AG04449 (cell line): ENCODE measurements at regions of chr14 and their contacts with region 1.

Region 1: DNA sequence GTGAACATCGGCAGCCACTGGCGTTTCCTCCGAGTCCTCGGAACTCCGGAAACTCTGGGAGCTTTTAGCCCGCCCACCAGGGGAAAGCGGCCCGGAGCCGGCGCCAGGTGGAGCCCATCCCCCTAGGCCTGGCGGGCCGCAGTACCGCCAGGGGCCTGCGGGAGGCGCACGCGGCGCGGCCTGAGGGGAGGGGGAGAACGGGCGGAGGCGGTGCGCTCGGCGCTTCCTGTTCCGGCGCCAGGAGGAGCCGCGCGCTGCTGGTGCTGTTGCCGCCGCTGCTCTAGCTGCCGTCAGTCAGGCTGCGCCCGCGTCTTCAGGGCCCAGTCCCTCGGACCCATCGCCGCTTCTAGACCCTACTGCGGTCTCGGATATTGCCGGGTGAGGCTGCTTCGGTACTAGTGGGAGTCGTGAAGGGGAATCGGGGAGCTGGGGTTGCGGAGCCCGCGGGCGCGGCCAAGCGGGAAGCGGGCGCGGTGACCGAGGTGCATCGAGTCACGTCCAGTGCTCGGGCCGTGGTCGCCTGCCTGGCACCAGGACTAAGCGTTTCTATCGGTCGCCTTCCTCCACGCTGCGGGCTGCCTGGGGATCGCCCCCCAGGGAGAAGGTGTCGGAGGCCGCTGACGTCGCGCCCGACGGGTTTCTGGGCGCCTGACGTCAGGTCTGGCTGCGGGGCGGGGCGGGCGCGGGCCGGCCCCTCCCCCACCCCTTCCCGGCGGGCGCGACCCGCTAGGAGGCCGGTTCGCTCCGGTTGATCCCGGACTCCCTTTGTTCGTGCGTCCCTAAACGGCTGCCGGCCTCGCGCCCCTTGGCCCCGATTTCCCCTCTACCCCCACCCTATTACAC is at the start of gene MAPK1IP1L:
- DNase-seq: no peak
- H3K4me3 ChIP-seq: peak within 1 kb of the TSS; percentile 99
- CTCF ChIP-seq: peak; percentile 92

Region 2: DNA sequence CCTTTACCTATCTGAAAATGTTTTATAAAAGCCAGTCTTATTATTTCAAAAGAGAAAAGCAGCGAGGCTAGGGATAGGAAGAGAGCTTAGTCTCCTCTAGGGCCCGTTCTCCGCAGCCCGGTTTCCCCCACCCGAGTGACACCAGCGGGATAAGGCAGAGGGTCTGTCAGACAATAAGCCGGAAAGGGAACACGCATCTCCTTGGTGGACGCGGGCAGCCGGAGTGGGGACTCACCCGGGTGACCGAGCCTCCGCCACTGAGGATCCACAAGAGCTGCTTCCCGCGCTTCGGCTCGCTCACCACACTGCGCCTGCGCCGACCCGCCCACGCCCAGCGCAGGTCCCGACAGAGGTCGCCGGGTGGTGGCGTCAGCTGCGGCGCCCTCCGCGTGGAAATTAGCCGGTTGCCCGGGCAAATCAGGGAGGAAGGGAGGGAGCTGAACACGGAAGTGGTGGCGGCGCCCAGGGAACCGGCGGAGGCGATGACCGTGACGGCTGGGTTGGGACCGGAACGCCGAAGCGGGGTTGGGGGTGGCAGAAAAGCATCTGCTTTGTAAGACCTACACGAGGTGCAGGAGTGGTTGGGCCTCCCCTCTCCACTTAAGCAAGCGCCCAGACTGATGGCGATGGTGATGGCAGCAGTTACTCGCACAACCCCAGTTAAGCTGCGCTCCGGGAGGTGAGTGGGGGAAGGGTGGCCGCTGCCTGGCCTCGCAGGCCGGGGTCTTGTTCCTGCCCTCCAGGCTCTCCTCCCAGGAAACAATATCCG is 24.7 kb before region 1 on chr14 and contains the starts of genes SOCS4 and WDHD1:
- CTCF ChIA-PET with region 1: interaction called, 41 read pairs
- POLR2A ChIA-PET with region 1: interaction called, 7 read pairs
- DNase-seq: peak; percentile 41
- H3K4me3 ChIP-seq: peak within 1 kb of the TSS; percentile 88
- CTCF ChIP-seq: peak; percentile 40

Region 3: DNA sequence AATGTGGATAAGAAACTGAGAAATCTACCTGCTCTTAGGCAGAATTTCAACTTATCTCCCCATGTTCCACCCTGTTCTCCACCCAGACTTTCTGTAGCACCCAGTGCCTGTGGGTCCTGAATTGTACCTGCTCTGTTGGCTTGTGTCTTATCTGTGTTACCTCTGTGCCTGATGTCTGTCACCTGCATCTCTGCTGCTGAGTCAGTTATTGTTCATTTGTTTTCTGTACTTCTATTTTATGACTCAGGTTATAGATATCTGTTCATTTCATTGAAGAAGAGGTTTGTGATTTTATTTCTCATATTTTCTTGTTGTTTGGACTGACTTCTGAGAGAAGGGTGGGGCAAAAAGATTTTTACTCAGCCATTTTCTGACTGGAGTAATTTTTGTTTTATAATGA is 12.9 kb before region 1 on chr14:
- CTCF ChIA-PET with region 1: interaction called, 25 read pairs
- POLR2A ChIA-PET with region 1: interaction called, 9 read pairs
- DNase-seq: no peak
- H3K4me3 ChIP-seq: no peak overlapping the region
- CTCF ChIP-seq: no peak

Region 4: DNA sequence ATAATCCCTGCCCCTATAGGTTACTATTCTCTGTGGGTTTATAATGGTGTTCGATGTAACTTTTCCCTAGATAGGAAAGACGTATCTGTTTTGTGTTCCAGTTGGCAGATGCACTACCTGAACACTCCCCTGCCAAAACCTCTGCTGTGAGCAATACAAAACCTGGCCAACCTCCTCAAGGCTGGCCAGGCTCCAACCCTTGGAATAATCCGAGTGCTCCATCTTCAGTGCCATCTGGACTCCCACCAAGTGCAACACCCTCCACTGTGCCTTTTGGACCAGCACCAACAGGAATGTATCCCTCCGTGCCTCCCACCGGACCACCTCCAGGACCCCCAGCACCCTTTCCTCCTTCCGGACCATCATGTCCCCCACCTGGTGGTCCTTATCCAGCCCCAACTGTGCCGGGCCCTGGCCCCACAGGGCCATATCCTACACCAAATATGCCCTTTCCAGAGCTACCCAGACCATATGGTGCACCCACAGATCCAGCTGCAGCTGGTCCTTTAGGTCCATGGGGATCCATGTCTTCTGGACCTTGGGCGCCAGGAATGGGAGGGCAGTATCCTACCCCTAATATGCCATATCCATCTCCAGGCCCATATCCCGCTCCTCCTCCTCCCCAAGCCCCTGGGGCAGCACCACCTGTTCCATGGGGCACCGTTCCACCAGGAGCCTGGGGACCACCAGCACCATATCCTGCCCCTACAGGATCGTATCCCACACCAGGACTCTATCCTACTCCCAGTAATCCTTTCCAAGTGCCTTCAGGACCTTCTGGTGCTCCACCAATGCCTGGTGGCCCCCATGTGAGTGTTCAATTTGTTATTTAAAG is 11.1 kb after region 1 on chr14:
- CTCF ChIA-PET with region 1: interaction called, 28 read pairs
- POLR2A ChIA-PET with region 1: no interaction called
- DNase-seq: no peak
- H3K4me3 ChIP-seq: no peak overlapping the region
- CTCF ChIP-seq: no peak

Region 5: GRCh38 chr14:55071870-55072640 is 20.4 kb after region 1 on chr14:
- CTCF ChIA-PET with region 1: interaction called, 33 read pairs
- POLR2A ChIA-PET with region 1: interaction called, 12 read pairs
- DNase-seq: peak; percentile 90
- H3K4me3 ChIP-seq: no peak overlapping the region
- CTCF ChIP-seq: no peak

Region 6: GRCh38 chr14:55094321-55095157 is 42.9 kb after region 1 on chr14:
- CTCF ChIA-PET with region 1: interaction called, 11 read pairs
- POLR2A ChIA-PET with region 1: no interaction called
- DNase-seq: no peak
- H3K4me3 ChIP-seq: no peak overlapping the region
- CTCF ChIP-seq: no peak

Region 7: DNA sequence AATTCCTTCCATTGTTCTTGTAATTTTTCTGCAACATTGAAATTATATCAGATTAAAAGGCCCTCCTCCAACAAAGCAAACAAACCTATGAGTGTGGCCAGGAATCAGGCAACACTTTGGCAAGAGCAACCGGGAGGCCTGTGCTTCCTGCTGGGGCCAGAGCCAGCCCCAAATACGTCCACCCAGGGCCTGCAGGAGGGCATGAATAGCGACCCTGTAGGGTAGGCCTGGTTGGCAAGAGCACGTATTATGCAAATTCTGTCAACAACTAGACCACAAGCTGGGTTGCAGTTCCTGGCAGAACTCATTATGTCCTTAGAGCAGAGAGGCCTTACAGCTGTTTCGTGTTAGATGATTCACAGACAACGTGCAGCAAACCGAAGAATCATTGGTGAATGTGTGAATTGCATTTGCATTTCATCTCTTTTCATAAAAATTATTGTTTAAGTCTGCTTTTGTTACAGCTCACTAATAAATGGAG is 50.5 kb after region 1 on chr14:
- CTCF ChIA-PET with region 1: interaction called, 10 read pairs
- POLR2A ChIA-PET with region 1: no interaction called
- DNase-seq: peak; percentile 98
- H3K4me3 ChIP-seq: no peak overlapping the region
- CTCF ChIP-seq: no peak

Region 8: GRCh38 chr14:55142466-55142865 is 90.8 kb after region 1 on chr14:
- CTCF ChIA-PET with region 1: no interaction called
- POLR2A ChIA-PET with region 1: no interaction called
- DNase-seq: no peak
- H3K4me3 ChIP-seq: no peak overlapping the region
- CTCF ChIP-seq: no peak